Left ventricle myocardium inferior (tissue), 1 donor: ENCODE measurements at regions of chr1 and their contacts with region 1.

Region 1: DNA sequence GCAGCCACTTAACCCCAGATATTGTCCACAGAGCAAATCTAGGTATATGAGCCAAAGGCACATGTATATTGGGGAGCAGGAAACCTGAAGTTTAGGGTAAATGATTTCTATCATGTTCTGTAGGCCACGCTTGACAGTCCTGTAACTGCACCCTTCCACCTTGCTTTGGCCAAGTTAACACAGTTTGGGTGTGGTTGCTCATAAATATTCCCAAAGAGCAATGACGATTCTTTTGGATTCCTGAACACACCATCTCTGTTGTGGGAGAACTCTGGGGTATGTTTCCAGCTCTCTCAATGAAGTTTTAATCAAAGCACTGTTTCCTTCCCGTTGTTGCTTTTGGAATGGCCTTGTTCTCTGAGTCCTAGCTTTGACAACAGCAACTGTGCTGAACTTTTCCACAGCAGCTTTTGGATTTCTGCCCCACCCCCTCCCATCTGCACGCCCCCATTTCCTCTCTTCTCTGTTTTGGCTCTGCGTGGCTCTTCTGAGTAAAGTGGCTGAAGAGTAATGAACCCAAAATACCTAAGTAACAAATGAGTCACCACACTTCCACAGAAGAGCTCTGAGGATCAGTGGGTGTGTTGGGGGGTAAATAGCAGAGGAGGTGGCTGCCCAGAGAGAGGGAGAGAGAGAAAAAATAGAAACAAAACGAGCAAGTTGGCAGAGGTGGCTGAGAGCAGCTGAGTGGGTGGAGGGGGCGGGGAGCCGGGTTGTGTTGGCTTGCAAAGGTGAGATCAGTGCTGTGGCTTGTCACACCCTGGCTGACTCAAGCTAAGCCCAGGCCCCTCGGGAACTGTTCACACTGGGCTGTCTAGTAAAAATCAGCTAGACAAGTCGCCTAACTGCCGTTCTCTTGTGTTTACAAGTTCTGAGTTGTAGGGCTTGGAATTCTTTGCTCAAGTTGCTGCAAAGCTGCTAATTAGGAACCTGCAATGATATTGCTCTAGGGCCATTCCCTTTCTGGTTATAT is 26.9 kb upstream of the RAP1A start:
- DNase-seq: peak; percentile 87
- H3K4me3 ChIP-seq: peak overlapping the region; percentile 36
- H3K27ac ChIP-seq: peak overlapping the region; percentile 94
- H3K4me1 ChIP-seq: peaks cover 42% of the 10 kb centered on the region
- H3K27me3 ChIP-seq: no peaks in the 10 kb centered on the region
- CTCF ChIP-seq: no peak

Region 2: GRCh38 chr1:111516005-111516535 is 76.6 kb before region 1 on chr1:
- intact Hi-C with region 1: loop called (anchors 10 kb)
- DNase-seq: peak; percentile 58
- H3K4me3 ChIP-seq: peak overlapping the region; percentile 61
- H3K27ac ChIP-seq: peak overlapping the region; percentile 96
- H3K4me1 ChIP-seq: peaks cover 71% of the 10 kb centered on the region
- H3K27me3 ChIP-seq: no peaks in the 10 kb centered on the region
- CTCF ChIP-seq: peak; percentile 56